OCI-LY7 (cell line): ENCODE measurements at regions of chr15 and their contacts with region 1.

Region 1: GRCh38 chr15:33309602-33310276 is 1.0 kb upstream of the RYR3 start:
- DNase-seq: peak; percentile 27
- H3K4me3 ChIP-seq: no peak overlapping the region
- H3K27ac ChIP-seq: no peak overlapping the region
- H3K4me1 ChIP-seq: peaks cover 11% of the 10 kb centered on the region
- CTCF ChIP-seq: peak; percentile 69

Region 2: GRCh38 chr15:33592864-33593263 is 283.1 kb after region 1 on chr15:
- CTCF ChIA-PET with region 1: no interaction called
- POLR2A ChIA-PET with region 1: no interaction called
- intact Hi-C with region 1: loop called (anchors 10 kb)
- DNase-seq: no peak
- H3K4me3 ChIP-seq: no peak overlapping the region
- H3K27ac ChIP-seq: no peak overlapping the region
- H3K4me1 ChIP-seq: no peaks in the 10 kb centered on the region
- CTCF ChIP-seq: no peak